Activated naive CD4-positive, alpha-beta T cell treated with anti-CD3 and anti-CD28 coated beads for 36 hours (primary cell): ENCODE measurements at regions of chrX and their contacts with region 1.

Region 1: GRCh38 chrX:41084044-41084892 is 977 bp upstream of the USP9X start:
- DNase-seq: peak; percentile 96
- H3K4me3 Mint-ChIP-seq: peak overlapping the region; percentile 89
- H3K27ac Mint-ChIP-seq: peak overlapping the region; percentile 100
- H3K4me1 Mint-ChIP-seq: peaks cover 22% of the 10 kb centered on the region
- H3K27me3 Mint-ChIP-seq: no peaks in the 10 kb centered on the region

Region 2: GRCh38 chrX:40647307-40648197 is 436.7 kb before region 1 on chrX and contains the start of gene CXorf38:
- CTCF ChIA-PET with region 1: no interaction called
- intact Hi-C with region 1: loop called (anchors 1 kb)
- DNase-seq: peak; percentile 94
- H3K4me3 Mint-ChIP-seq: peak within 1 kb of the TSS; percentile 84
- H3K27ac Mint-ChIP-seq: peak within 1 kb of the TSS; percentile 91
- H3K4me1 Mint-ChIP-seq: peaks cover 25% of the 10 kb centered on the region
- H3K27me3 Mint-ChIP-seq: no peaks in the 10 kb centered on the region
- total RNA-seq, gene CXorf38: 23.2 to 23.3 TPM

Region 3: DNA sequence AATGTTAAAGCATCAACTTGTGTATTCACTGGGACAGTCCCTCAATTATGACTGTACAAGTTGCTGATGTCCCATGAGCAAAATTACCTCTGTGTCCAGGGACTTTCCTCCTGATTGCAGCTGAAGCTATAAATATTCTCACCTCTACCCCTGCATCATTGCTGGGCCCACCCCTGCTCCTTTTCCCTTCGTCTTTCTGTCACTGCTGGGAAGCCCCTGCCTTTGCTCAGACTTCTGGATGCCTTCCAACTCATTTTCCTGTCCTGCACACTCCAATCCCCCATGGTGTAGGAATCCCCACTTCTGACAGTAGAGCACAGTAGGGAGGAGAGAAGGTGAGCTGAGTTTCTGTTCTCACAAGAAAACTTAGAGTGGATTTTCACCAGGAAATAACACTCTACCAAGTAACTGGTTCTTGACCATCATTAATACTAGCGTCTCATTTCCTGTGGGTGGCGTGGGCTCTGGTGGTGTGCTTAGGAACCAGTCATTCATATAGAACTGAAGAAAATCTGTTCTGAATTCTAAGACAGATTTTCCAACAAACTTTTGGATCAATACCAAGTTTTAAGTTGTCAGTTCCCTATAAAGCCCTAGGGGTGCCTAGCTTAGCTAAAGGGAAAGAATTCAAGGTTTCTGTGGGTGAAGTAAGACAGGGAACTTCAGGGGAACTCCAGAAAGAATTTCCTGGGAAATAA is 212.7 kb before region 1 on chrX:
- CTCF ChIA-PET with region 1: no interaction called
- intact Hi-C with region 1: loop called (anchors 1 kb)
- DNase-seq: peak; percentile 72
- H3K4me3 Mint-ChIP-seq: no peak overlapping the region
- H3K27ac Mint-ChIP-seq: peak overlapping the region; percentile 88
- H3K4me1 Mint-ChIP-seq: peaks cover 12% of the 10 kb centered on the region
- H3K27me3 Mint-ChIP-seq: no peaks in the 10 kb centered on the region

Region 4: GRCh38 chrX:41010188-41010846 is 74.0 kb before region 1 on chrX:
- CTCF ChIA-PET with region 1: no interaction called
- intact Hi-C with region 1: loop called (anchors 1 kb)
- DNase-seq: peak; percentile 78
- H3K4me3 Mint-ChIP-seq: peak overlapping the region; percentile 54
- H3K27ac Mint-ChIP-seq: peak overlapping the region; percentile 77
- H3K4me1 Mint-ChIP-seq: peaks cover 29% of the 10 kb centered on the region
- H3K27me3 Mint-ChIP-seq: no peaks in the 10 kb centered on the region

Region 5: GRCh38 chrX:41923257-41923969 is 839.1 kb after region 1 on chrX and contains the start of gene CASK:
- CTCF ChIA-PET with region 1: no interaction called
- intact Hi-C with region 1: loop called (anchors 10 kb)
- DNase-seq: peak; percentile 91
- H3K4me3 Mint-ChIP-seq: peak within 1 kb of the TSS; percentile 82
- H3K27ac Mint-ChIP-seq: peak within 1 kb of the TSS; percentile 73
- H3K4me1 Mint-ChIP-seq: peaks cover 24% of the 10 kb centered on the region
- H3K27me3 Mint-ChIP-seq: no peaks in the 10 kb centered on the region
- total RNA-seq, gene CASK: 15.4 to 18.9 TPM